Sciatic nerve (tissue), 2 donors: ENCODE measurements at regions of chr5 and their contacts with region 1.

Region 1: DNA sequence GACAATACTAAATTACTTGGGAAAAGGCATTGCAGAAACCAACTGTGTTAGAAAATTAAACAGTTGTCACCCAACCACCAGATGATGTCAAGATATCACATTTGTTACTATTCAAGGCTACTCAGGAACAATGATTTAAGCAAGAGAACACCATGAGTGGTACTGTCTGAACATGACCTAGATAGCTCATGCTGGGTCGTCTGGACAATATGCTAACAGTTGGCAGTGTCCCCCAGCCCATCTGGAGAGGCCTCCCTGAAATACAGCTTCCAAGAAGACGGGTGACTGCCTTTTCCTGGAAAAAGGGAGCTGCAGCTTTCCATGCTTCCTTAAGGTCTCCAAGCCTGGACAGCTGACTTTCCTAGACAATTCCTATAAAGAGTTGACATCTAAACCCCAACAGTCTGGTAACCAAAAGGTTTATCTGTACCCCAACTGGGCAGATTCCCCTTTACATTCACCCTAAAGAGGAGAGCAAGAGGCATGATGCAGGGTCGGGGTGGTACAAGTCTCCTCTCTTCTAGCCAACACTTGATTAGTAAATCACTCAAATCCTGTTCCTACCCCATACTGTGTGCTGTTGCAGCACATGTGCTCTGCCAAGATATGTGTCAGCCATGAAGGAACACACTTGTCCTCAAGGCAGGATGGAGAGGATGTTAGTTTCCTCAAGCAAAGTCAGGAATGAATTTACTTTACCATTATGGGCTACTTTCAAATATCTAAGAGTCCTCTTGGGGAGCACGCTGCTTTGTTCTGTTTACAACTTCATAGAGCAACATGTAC is 433.0 kb downstream of the PDE4D start:
- DNase-seq: no peak
- ATAC-seq: no peak

Region 2: DNA sequence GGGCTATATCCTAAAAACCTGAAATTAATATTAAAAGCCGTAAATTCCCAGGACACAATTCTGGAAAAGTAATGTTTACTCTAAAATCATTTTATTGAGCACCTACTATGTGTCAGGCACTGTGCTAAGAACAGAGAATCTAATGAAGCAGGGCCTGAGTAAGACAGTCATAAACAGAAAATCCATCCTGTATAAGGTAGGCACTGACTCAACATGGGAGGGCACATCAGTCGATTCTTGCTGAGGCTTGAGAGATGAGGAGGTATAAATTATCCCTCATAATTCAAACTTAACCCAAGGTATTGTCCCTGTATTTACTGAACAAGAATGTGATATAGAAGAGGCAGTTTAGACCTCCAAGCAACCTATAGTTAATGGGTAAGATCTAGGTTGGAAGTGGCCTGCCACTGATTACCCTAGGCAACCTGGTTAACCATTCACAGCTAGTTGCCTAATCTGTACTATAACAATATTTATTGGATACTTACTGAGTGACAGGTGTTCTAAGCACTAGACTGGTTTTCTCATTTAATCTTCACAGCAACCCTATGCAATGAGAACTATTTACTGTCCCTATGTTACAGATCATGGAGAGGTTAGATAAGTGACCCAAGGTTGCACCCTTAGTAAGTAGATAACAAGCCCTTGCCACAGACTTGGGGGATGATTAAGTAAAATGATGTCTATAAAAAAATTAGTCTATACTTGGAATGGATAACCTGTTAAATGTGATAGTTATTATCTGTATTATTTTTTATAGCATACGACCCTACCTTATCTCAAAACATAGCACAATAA is 115.3 kb after region 1 on chr5:
- intact Hi-C with region 1: loop called (anchors 5 kb)
- DNase-seq: no peak
- ATAC-seq: no peak